Transverse colon (tissue), 4 donors: ENCODE measurements at regions of chr6 and their contacts with region 1.

Region 1: GRCh38 chr6:37051138-37052026 is 45.9 kb downstream of the FGD2 start:
- DNase-seq: peak; percentile 94
- H3K4me3 ChIP-seq: no peak overlapping the region
- H3K27ac ChIP-seq: no peak overlapping the region
- H3K4me1 ChIP-seq: peaks cover 0 to 27% (median 17%) of the 10 kb centered on the region in 4 donors
- H3K27me3 ChIP-seq: no peaks in the 10 kb centered on the region
- CTCF ChIP-seq: peak; percentile 89 to 98 (median 90)
- EP300 ChIP-seq: no peak
- POLR2A ChIP-seq: no peak

Region 2: GRCh38 chr6:37127961-37128862 is 76.8 kb after region 1 on chr6:
- in situ Hi-C with region 1: no loop called
- intact Hi-C with region 1: loop called (anchors 10 kb)
- DNase-seq: peak; percentile 42
- H3K4me3 ChIP-seq: no peak overlapping the region
- H3K27ac ChIP-seq: peak overlapping the region; percentile 10 to 48 (median 44)
- H3K4me1 ChIP-seq: peaks cover 14 to 37% (median 19%) of the 10 kb centered on the region in 4 donors
- H3K27me3 ChIP-seq: no peaks in the 10 kb centered on the region
- CTCF ChIP-seq: no peak
- EP300 ChIP-seq: no peak
- POLR2A ChIP-seq: no peak

Region 3: DNA sequence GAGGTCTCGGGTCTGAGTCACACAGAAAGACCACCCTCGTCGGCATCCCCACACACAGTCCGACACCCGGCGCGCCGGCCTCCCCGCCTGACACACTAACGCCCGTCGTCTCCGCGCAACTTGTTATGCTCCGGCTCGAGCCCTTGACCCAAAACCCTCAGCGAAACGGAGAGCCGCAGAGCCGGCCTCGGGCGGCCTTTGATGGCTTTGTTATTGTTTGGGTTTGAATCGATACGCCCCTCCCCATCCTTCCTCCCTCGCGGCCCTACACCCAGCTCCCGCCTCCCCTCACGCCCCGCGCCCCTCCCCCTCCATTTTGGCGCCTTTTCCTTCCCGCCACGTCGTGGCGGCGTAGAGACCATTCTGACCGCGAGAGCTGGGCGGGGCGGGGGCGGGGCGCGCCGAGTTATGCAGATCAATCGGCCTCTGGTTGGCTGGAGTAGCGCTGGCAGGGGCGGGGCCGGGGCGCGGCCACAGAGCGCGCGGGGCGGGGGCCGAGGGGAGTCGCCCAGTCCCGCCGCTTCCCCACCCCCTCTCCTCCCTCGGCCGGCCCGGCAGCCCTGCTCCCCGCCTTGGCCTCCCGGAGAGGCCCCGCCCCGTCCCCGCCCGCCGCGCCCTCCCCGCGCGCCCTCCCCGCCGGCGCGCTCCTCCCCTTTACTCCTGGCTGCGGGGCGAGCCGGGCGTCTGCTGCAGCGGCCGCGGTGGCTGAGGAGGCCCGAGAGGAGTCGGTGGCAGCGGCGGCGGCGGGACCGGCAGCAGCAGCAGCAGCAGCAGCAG is 118.3 kb after region 1 on chr6 and contains the start of gene PIM1:
- in situ Hi-C with region 1: loop called (anchors 5 kb)
- intact Hi-C with region 1: loop called (anchors 2 kb)
- DNase-seq: peak; percentile 99
- H3K4me3 ChIP-seq: peak within 1 kb of the TSS; percentile 78 to 92 (median 88)
- H3K27ac ChIP-seq: peak within 1 kb of the TSS; percentile 96 to 98 (median 96)
- H3K4me1 ChIP-seq: peaks cover 13 to 44% (median 21%) of the 10 kb centered on the region in 4 donors
- H3K27me3 ChIP-seq: no peaks in the 10 kb centered on the region
- CTCF ChIP-seq: peak in 1 of 5 experiments; percentile 6
- EP300 ChIP-seq: no peak
- POLR2A ChIP-seq: peak; percentile 60
- total RNA-seq, gene PIM1: 6.8 to 102 (median 24.0) TPM

Region 4: DNA sequence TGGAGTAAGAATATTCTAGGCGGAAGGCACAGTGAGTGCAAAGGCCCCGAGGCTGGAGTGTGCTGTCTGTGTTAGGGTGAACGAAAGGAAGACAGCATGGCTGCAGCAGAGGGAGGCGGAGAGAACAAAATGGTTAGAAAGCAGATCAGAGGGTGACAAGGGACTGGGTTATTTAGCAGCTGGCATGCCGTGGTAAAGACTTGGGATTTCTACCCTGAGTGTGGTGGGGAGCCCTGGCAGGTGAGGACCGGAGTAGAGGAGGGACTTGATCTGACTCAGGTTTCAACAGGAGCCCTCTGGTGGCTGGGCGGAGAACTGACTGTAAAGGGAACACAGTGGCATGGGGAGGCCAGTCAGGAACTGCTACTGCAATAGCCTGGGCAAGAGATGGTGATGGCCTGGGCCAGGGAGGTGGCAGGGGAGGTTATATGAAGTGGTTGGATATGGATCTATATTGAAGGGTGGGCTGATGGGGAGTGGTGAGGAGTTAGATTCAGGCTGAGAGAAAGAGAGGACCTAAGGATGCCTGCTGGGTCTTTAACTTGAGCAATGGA is 156.6 kb after region 1 on chr6:
- in situ Hi-C with region 1: loop called in 2 of 4 experiments (anchors 10 kb)
- intact Hi-C with region 1: loop called (anchors 1 kb)
- DNase-seq: peak; percentile 92
- H3K4me3 ChIP-seq: no peak overlapping the region
- H3K27ac ChIP-seq: no peak overlapping the region
- H3K4me1 ChIP-seq: peaks cover 11 to 32% (median 11%) of the 10 kb centered on the region in 4 donors
- H3K27me3 ChIP-seq: no peaks in the 10 kb centered on the region
- CTCF ChIP-seq: peak; percentile 71 to 90 (median 84)
- EP300 ChIP-seq: no peak
- POLR2A ChIP-seq: no peak

Region 5: GRCh38 chr6:38797391-38797790 is 1746.0 kb after region 1 on chr6:
- in situ Hi-C with region 1: no loop called
- intact Hi-C with region 1: no loop called
- DNase-seq: no peak
- H3K4me3 ChIP-seq: no peak overlapping the region
- H3K27ac ChIP-seq: peak overlapping the region in 1 of 4 donors; percentile 50
- H3K4me1 ChIP-seq: no peaks in the 10 kb centered on the region
- H3K27me3 ChIP-seq: peaks cover 22% of the 10 kb centered on the region
- CTCF ChIP-seq: no peak
- EP300 ChIP-seq: no peak
- POLR2A ChIP-seq: no peak